HCT116 (cell line): ENCODE measurements at regions of chr12 and their contacts with region 1.

Region 1: GRCh38 chr12:109910969-109911348 is 10.9 kb downstream of the TCHP start:
- DNase-seq: peak; percentile 43
- ATAC-seq: peak; percentile 99
- H3K4me3 ChIP-seq: no peak overlapping the region
- H3K27ac ChIP-seq: no peak overlapping the region
- H3K4me1 ChIP-seq: no peaks in the 10 kb centered on the region
- H3K27me3 ChIP-seq: no peaks in the 10 kb centered on the region
- CTCF ChIP-seq: peak; percentile 78 to 99 (median 84)
- POLR2A ChIP-seq: no peak
- RAD21 ChIP-seq: peak; percentile 51

Region 2: DNA sequence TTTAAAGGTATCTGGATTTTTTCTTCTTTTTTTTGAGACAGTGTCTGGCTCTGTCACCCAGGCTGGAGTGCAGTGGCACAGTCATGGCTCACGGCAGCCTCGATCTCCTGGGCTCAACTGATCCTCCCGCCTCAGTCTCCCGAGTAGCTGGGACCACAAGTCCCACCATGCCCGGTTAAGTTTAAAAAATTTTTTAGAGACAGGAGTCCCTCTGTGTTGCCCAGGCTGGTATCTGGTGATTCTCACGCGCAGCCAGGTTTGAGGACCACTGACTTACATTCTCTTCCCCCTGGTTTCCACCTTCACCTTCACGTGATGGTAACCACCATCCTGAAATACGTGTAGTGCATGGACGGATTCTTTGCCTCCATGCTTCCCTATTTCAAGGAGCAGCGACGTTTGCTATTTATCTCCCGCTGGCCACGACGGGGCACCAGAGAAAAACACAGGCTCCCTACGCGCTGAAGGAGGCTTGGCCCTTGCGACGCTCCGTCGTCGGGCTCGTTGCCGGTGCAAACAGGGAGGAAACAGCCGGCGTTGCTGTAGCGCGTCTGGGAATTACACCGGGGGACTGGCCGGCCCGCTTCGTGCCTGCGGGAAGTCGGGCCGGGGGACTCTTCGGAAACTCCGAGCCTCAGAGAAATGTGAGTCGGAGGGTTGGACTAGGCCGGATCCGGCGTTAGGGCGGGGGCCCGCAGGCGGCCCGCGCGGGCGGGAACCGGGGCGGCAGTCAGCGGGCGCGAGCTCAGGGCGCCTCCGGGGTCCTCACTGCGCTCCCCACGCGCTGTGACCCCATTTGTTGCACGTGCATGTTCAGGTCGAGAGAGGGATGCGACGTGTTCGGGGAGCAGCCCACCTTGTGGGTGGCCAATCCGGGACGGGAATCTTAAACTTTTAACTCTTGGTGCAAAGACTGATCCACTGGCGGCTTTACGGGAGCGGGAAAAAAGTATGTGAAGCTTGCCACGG is 10.9 kb before region 1 on chr12 and contains the start of gene TCHP:
- CTCF ChIA-PET with region 1: interaction called, 10 read pairs
- POLR2A ChIA-PET with region 1: no interaction called
- RAD21 ChIA-PET with region 1: no interaction called
- intact Hi-C with region 1: no loop called
- DNase-seq: peak; percentile 74
- ATAC-seq: peak; percentile 81
- H3K4me3 ChIP-seq: peak within 1 kb of the TSS; percentile 76 to 79
- H3K27ac ChIP-seq: peak within 1 kb of the TSS; percentile 65
- H3K4me1 ChIP-seq: peaks cover 6 to 25% of the 10 kb centered on the region in 2 experiments; a peak in 3 of 4 replicates
- H3K27me3 ChIP-seq: no peaks in the 10 kb centered on the region
- CTCF ChIP-seq: peak; percentile 11 to 40 (median 18); a peak in 3 of 6 replicates
- POLR2A ChIP-seq: no peak
- RAD21 ChIP-seq: peak; percentile 37; the same call in 1 of the 2 replicates
- total RNA-seq, gene TCHP: 17.3 TPM

Region 3: DNA sequence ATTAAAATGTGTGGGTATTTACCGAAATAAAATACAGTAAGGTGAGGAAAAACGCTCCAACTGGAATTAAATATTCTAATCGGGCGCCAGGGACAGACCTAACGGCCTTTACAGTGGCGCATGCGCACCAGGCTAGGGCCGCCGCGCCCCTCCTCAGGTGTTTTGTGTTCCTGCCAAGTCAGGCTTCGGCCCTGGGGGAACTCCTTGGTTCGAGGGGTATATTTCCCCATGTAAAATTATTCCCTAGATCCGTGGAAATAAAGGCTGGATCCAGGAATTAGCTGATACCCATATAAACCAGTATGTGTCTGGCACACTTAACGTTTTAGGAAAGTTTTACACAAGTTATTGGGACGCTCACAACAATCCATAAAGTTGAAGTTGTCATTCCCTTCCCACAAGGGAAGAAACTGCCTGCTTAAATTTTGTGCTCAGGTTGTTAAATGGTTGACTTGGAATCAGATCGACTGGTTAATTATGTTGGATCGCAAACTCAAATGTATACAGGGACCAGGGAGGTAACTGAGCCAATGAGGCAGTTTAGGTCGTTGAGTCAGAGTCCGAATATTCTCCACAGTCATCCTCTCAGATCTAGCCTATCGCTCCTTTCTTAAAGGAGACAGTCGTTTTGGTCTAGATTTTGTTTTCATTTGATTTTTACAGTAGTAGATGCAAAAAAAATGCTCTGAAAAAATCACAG is 493.2 kb after region 1 on chr12:
- CTCF ChIA-PET with region 1: no interaction called
- POLR2A ChIA-PET with region 1: no interaction called
- RAD21 ChIA-PET with region 1: interaction called in 1 of 2 experiments, 14 read pairs
- intact Hi-C with region 1: no loop called
- DNase-seq: peak; percentile 45
- ATAC-seq: peak; percentile 67
- H3K4me3 ChIP-seq: peak overlapping the region; percentile 84 to 99
- H3K27ac ChIP-seq: peak overlapping the region; percentile 74
- H3K4me1 ChIP-seq: peaks cover 6 to 19% of the 10 kb centered on the region in 2 experiments
- H3K27me3 ChIP-seq: no peaks in the 10 kb centered on the region
- CTCF ChIP-seq: no peak
- POLR2A ChIP-seq: peak; percentile 24
- RAD21 ChIP-seq: no peak